ENCODE measurements at regions of chr19 and their contacts with region 1.

Region 1: DNA sequence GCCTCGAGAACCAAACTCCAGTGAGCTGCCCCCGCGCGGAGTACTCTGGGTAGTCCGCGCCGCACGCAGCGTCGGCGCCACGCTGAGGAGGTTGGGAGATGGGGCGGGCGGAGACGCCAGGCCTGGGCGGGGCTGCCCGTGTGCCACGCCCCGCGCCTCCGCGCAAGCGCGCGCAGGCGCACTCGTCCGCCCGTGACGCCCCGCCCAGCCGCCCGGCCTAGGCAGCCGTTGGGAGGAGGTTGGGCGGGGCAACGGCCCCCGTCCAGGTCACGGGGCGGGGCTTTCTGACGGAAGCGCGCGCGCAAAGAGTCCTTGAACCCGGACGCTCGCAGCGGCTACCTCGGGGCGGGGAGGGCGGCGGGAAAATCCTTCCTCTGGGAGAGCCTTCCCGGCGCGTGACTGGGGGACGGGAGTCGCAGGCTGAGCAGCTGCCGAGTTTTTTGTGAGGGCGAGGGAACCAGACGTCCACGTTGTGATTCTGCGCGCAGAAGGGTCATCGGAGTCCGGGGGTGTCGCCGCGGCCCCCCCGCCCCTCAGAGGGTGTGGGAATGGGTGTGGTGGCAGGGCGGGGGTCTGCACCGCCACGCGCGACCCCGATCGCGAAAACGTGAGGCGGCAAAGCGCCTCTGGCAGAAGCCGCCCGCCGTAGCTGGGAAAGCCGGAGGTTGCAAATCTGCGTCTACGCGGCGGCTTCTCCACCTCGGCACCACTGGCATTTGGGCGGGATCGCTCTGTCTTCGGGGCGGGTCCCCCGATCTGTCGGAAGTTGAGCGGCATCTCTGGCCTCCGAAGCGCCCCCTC is at the start of gene MED26:
- DNase-seq: peak; percentile 92 to 94 (median 92)
- H3K4me3 ChIP-seq: peak within 1 kb of the TSS; percentile 71 to 90
- H3K4me3 Mint-ChIP-seq: peak within 1 kb of the TSS; percentile 95 to 99 (median 98)
- H3K27ac ChIP-seq: peak within 1 kb of the TSS; percentile 91
- H3K27ac Mint-ChIP-seq: peak within 1 kb of the TSS; percentile 93 to 99 (median 98)
- H3K4me1 ChIP-seq: peaks cover 42% of the 10 kb centered on the region
- H3K4me1 Mint-ChIP-seq: peaks cover 26 to 51% (median 41%) of the 10 kb centered on the region in 4 donors
- H3K27me3 ChIP-seq: no peaks in the 10 kb centered on the region
- H3K27me3 Mint-ChIP-seq: no peaks in the 10 kb centered on the region
- total RNA-seq, gene MED26: 17.8 to 18.6 TPM

Region 2: DNA sequence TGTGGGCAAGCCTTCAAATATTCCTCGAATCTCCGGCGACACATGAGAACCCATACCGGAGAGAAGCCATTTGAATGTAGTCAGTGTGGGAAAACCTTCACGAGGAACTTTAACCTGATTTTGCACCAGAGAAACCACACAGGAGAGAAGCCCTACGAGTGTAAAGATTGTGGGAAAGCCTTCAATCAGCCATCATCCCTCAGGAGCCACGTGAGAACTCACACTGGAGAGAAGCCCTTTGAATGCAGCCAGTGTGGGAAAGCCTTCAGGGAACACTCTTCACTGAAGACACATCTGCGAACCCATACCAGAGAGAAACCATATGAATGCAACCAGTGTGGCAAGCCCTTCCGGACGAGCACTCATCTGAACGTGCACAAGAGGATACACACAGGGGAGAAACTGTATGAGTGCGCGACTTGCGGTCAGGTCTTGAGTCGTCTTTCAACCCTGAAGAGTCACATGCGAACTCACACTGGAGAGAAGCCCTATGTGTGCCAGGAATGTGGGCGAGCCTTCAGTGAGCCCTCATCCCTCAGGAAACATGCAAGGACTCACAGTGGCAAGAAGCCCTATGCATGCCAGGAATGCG is 1909.8 kb before region 1 on chr19:
- CTCF ChIA-PET with region 1: no interaction called
- POLR2A ChIA-PET with region 1: no interaction called
- intact Hi-C with region 1: no loop called
- DNase-seq: no peak
- H3K4me3 ChIP-seq: no peak overlapping the region
- H3K4me3 Mint-ChIP-seq: no peak overlapping the region
- H3K27ac ChIP-seq: no peak overlapping the region
- H3K27ac Mint-ChIP-seq: no peak overlapping the region
- H3K4me1 ChIP-seq: no peaks in the 10 kb centered on the region
- H3K4me1 Mint-ChIP-seq: no peaks in the 10 kb centered on the region
- H3K27me3 ChIP-seq: no peaks in the 10 kb centered on the region
- H3K27me3 Mint-ChIP-seq: no peaks in the 10 kb centered on the region

Region 3: DNA sequence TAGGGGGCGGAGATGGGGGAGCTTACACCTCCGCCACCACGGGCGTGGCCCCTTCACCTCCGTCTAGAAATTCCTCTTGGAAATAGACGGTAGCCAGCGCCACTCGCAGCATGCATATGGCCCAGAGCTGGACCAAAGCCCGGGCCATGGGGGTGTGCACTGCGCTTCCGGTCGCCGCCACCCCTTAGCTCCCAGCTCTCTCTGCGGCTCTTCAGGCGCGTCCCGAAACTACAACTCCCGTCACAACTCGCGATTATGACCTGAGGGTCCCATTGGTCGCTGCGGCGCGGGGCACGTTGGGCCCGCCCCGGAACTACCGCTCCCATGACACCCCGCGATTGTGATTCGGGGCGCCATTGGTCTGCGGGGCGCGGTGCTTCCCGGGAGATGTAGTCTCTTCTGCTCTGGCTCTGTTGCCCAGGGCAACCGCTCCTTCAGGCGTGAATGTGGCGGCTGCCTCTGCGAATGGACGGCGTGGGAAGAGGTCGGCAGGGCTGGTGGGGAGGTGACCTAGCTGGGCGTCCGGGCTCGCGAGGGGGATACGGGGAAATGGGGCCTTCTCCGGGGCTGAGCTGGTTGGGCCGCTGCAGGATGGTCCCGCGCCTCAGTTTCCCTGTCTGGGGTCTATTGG is 132.3 kb before region 1 on chr19 and contains the starts of genes C19orf44 and CALR3:
- CTCF ChIA-PET with region 1: interaction called, 4 read pairs
- POLR2A ChIA-PET with region 1: interaction called, 9 read pairs
- intact Hi-C with region 1: loop called (anchors 1 kb)
- DNase-seq: peak; percentile 96 to 97 (median 96)
- H3K4me3 ChIP-seq: peak within 1 kb of the TSS; percentile 65 to 75
- H3K4me3 Mint-ChIP-seq: peak within 1 kb of the TSS; percentile 89 to 95 (median 92)
- H3K27ac ChIP-seq: peak within 1 kb of the TSS; percentile 50
- H3K27ac Mint-ChIP-seq: peak within 1 kb of the TSS; percentile 79 to 97 (median 93)
- H3K4me1 ChIP-seq: peaks cover 10% of the 10 kb centered on the region
- H3K4me1 Mint-ChIP-seq: peaks cover 5 to 14% (median 9%) of the 10 kb centered on the region in 4 donors
- H3K27me3 ChIP-seq: no peaks in the 10 kb centered on the region
- H3K27me3 Mint-ChIP-seq: no peaks in the 10 kb centered on the region
- total RNA-seq, gene C19orf44: 4.6 to 6.7 TPM
- total RNA-seq, gene CALR3: not detected

Region 4: GRCh38 chr19:16566161-16566560 is 62.2 kb before region 1 on chr19:
- CTCF ChIA-PET with region 1: no interaction called
- POLR2A ChIA-PET with region 1: interaction called, 34 read pairs
- intact Hi-C with region 1: no loop called
- DNase-seq: peak; percentile 89 to 96 (median 93)
- H3K4me3 ChIP-seq: peak overlapping the region; percentile 22 to 31
- H3K4me3 Mint-ChIP-seq: peak overlapping the region; percentile 83 to 98 (median 86)
- H3K27ac ChIP-seq: peak overlapping the region; percentile 71
- H3K27ac Mint-ChIP-seq: peak overlapping the region; percentile 87 to 100 (median 100)
- H3K4me1 ChIP-seq: peaks cover 47% of the 10 kb centered on the region
- H3K4me1 Mint-ChIP-seq: peaks cover 23 to 61% (median 44%) of the 10 kb centered on the region in 4 donors
- H3K27me3 ChIP-seq: no peaks in the 10 kb centered on the region
- H3K27me3 Mint-ChIP-seq: no peaks in the 10 kb centered on the region

Region 5: GRCh38 chr19:16584248-16585141 is 43.9 kb before region 1 on chr19:
- CTCF ChIA-PET with region 1: interaction called, 5 read pairs
- POLR2A ChIA-PET with region 1: interaction called, 69 read pairs
- intact Hi-C with region 1: loop called (anchors 1 kb)
- DNase-seq: peak; percentile 89 to 99 (median 91)
- H3K4me3 ChIP-seq: peak overlapping the region; percentile 45 to 52
- H3K4me3 Mint-ChIP-seq: peak overlapping the region; percentile 70 to 90 (median 80)
- H3K27ac ChIP-seq: peak overlapping the region; percentile 58
- H3K27ac Mint-ChIP-seq: peak overlapping the region; percentile 96 to 99 (median 97)
- H3K4me1 ChIP-seq: peaks cover 86% of the 10 kb centered on the region
- H3K4me1 Mint-ChIP-seq: peaks cover 53 to 93% (median 74%) of the 10 kb centered on the region in 4 donors
- H3K27me3 ChIP-seq: no peaks in the 10 kb centered on the region
- H3K27me3 Mint-ChIP-seq: no peaks in the 10 kb centered on the region

Region 6: GRCh38 chr19:16659831-16660708 is 31.7 kb after region 1 on chr19 and contains the start of gene SMIM7:
- CTCF ChIA-PET with region 1: interaction called, 4 read pairs
- POLR2A ChIA-PET with region 1: interaction called, 41 read pairs
- intact Hi-C with region 1: loop called (anchors 1 kb)
- DNase-seq: peak; percentile 99
- H3K4me3 ChIP-seq: peak within 1 kb of the TSS; percentile 96
- H3K4me3 Mint-ChIP-seq: peak within 1 kb of the TSS; percentile 96 to 99 (median 98)
- H3K27ac ChIP-seq: peak within 1 kb of the TSS; percentile 82
- H3K27ac Mint-ChIP-seq: peak within 1 kb of the TSS; percentile 96 to 99 (median 99)
- H3K4me1 ChIP-seq: peaks cover 37% of the 10 kb centered on the region
- H3K4me1 Mint-ChIP-seq: peaks cover 21 to 58% (median 44%) of the 10 kb centered on the region in 4 donors
- H3K27me3 ChIP-seq: no peaks in the 10 kb centered on the region
- H3K27me3 Mint-ChIP-seq: no peaks in the 10 kb centered on the region
- total RNA-seq, gene SMIM7: 89.3 to 94.1 TPM

Region 7: DNA sequence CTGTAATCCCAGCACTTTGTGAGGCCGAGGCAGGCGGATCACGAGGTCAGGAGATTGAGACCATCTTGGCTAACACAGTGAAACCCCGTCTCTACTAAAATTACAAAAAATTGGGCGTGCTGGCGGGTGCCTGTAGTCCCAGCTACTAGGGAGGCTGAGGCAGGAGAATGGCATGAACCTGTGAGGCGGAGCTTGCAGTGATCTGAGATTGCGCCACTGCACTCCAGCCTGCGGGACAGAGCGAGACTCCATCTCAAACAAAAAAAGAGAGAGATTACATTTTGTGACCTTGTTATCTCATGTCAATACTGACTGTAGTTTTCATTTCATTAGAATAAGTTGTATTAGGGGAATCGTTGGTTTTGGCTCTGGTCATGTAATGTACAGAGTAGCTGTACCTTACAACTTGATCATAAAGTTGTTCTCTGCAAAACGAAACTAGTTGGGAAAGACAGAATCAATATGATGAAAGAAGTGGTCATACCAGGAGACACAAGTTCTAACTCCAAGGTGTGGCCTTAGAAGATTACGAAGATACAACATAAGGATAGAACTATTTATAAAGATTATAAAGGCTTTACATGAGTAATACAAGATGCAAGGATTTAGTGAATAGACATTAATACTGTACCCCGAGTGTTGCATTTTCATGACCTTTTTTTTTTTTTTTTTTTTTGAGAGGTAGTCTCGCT is 47.9 kb after region 1 on chr19:
- CTCF ChIA-PET with region 1: no interaction called
- POLR2A ChIA-PET with region 1: no interaction called
- intact Hi-C with region 1: no loop called
- DNase-seq: no peak
- H3K4me3 ChIP-seq: no peak overlapping the region
- H3K4me3 Mint-ChIP-seq: no peak overlapping the region
- H3K27ac ChIP-seq: no peak overlapping the region
- H3K27ac Mint-ChIP-seq: no peak overlapping the region
- H3K4me1 ChIP-seq: no peaks in the 10 kb centered on the region
- H3K4me1 Mint-ChIP-seq: no peaks in the 10 kb centered on the region
- H3K27me3 ChIP-seq: no peaks in the 10 kb centered on the region
- H3K27me3 Mint-ChIP-seq: peaks cover 0 to 3% of the 10 kb centered on the region in 2 donors

Measured in CD4-positive, alpha-beta memory T cell (primary cell).